SK-N-SH (cell line): ENCODE measurements at regions of chrX and their contacts with region 1.

Region 1: GRCh38 chrX:153927922-153928760 is 2.1 kb upstream of the ARHGAP4 start:
- DNase-seq: peak; percentile 97
- H3K4me3 ChIP-seq: peak overlapping the region; percentile 71 to 94
- H3K27ac ChIP-seq: peak overlapping the region; percentile 97
- H3K4me1 ChIP-seq: peaks cover under 1 to 50% of the 10 kb centered on the region in 2 experiments; a peak in 1 of 4 replicates
- H3K27me3 ChIP-seq: peaks cover 5% of the 10 kb centered on the region; the same call in 1 of the 2 replicates
- CTCF ChIP-seq: peak; percentile 46
- EP300 ChIP-seq: 0 out of 4 replicates have a peak, but pooled peaks of 1 of the 2 experiments have one; percentile 29
- RAD21 ChIP-seq: no peak; the same call in 1 of the 2 replicates

Region 2: GRCh38 chrX:153763989-153764755 is 164.0 kb before region 1 on chrX and contains the start of gene PLXNB3:
- CTCF ChIA-PET with region 1: interaction called, 16 read pairs
- POLR2A ChIA-PET with region 1: no interaction called
- DNase-seq: peak; percentile 87
- H3K4me3 ChIP-seq: peak within 1 kb of the TSS; percentile 40 to 49
- H3K27ac ChIP-seq: peak within 1 kb of the TSS in 1 of 2 experiments; percentile 82; a peak in 3 of 4 replicates
- H3K4me1 ChIP-seq: peaks cover 2 to 27% of the 10 kb centered on the region in 2 experiments; a peak in 1 of 4 replicates
- H3K27me3 ChIP-seq: no peaks in the 10 kb centered on the region
- CTCF ChIP-seq: peak; percentile 92
- EP300 ChIP-seq: no peak
- RAD21 ChIP-seq: peak; percentile 90
- polyA plus RNA-seq, gene PLXNB3: 13.8 and 15.5 TPM in 2 replicates

Region 3: DNA sequence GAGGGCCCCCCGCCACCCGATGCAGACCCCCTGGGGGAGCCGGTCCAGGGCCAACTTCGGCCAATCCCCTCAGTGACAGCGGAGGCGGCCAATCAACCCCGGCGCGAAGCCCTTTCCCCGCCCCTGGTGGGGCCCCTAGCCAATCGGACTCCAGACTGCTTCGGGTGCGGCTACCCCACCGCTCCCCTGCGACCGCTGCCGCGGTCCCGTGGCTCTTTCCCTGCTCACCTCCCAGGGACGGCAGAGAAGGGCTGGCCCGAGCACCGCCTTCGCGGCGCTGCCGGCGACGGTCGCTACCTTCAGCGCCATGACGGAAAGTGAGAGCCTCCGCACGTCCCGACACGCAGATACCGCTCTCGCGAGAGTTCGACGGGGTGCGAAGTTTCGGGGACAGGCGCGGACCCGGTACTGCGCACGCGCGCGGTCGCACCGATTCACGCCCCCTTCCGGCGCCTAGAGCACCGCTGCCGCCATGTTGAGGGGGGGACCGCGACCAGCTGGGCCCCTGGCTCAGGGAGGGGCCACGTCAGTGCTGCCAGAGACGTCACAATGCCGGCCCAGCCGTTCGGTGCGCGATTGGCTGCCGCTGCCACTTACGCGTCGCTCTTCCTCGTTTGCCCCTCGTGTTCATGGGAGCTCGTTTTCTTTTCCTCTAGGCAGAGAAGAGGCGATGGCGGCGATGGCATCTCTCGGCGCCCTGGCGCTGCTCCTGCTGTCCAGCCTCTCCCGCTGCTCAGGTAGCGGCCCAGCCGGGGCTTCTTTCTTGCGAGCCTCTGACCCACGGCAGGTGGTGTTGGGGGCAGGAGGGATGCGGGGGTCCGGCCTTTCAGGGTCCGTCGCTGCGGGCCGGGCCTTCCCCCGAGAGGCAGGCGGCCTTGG is 133.9 kb before region 1 on chrX and contains the starts of genes IDH3G and SSR4:
- CTCF ChIA-PET with region 1: no interaction called
- POLR2A ChIA-PET with region 1: interaction called, 14 read pairs
- DNase-seq: peak; percentile 97
- H3K4me3 ChIP-seq: peak within 1 kb of the TSS; percentile 67 to 76
- H3K27ac ChIP-seq: peak within 1 kb of the TSS; percentile 80 to 84
- H3K4me1 ChIP-seq: peaks cover 5 to 27% of the 10 kb centered on the region in 2 experiments; a peak in 1 of 4 replicates
- H3K27me3 ChIP-seq: peaks cover 14% of the 10 kb centered on the region; the same call in 1 of the 2 replicates
- CTCF ChIP-seq: no peak
- EP300 ChIP-seq: no peak
- RAD21 ChIP-seq: no peak
- polyA plus RNA-seq, gene IDH3G: 78.0 and 107 TPM in 2 replicates
- polyA plus RNA-seq, gene SSR4: 326 and 367 TPM in 2 replicates

Region 4: DNA sequence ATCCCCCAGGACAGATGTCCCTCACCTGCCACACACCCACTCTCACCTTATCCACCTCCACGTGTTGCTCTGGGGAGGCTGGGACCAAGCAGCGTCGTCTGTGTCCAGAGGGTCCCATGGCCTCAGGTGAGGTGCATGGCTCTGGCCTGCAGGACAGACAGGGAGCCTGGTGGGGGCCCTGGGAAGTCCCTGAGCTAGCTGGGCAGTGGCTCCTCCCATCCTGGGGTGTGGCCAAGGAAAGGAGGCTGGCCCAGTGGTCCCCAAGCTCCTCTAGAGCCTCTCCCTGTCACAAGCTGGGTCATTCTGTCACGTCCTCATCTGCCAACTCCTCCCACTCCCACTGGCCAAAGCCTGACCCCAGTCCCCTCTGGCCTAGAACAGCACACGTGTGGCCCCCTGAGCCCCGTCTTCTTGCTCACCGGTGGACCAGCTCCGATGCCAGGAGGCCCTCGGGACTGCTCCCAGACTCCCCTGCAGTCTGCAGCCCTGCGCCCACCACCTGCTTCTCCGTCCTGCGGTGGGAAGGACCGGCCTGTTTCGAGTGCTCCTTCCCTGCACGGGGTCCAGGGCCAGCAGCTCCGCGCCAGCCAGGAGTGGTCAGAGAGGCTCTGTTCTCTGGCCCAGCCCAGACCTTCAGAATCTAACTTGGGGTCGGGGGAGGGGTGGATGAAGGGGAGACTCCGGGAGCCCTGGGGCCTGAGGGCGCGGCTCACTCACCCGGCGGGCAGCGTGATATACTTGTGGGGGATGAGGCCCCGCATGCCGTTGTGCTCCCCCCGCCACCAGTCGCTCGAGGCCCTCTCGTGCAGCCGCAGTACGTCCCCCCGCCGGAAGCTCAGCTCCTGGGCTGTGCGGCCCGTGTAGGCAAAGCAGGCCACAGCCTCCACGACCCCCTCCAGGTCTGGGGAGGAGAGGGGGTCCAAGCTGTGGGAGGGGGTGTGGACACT is 18.8 kb before region 1 on chrX:
- CTCF ChIA-PET with region 1: interaction called, 130 read pairs
- POLR2A ChIA-PET with region 1: interaction called, 3 read pairs
- DNase-seq: peak; percentile 71
- H3K4me3 ChIP-seq: no peak overlapping the region
- H3K27ac ChIP-seq: no peak overlapping the region
- H3K4me1 ChIP-seq: peaks cover 0 to 7% of the 10 kb centered on the region in 2 experiments; a peak in 1 of 4 replicates
- H3K27me3 ChIP-seq: peaks cover 69% of the 10 kb centered on the region
- CTCF ChIP-seq: no peak
- EP300 ChIP-seq: no peak
- RAD21 ChIP-seq: no peak

Region 5: GRCh38 chrX:153941336-153942252 is 13.5 kb after region 1 on chrX:
- CTCF ChIA-PET with region 1: interaction called, 271 read pairs
- POLR2A ChIA-PET with region 1: interaction called, 9 read pairs
- DNase-seq: no peak
- H3K4me3 ChIP-seq: no peak overlapping the region
- H3K27ac ChIP-seq: no peak overlapping the region
- H3K4me1 ChIP-seq: peaks cover 0 to 2% of the 10 kb centered on the region in 2 experiments; a peak in 1 of 4 replicates
- H3K27me3 ChIP-seq: peaks cover 2% of the 10 kb centered on the region; the same call in 1 of the 2 replicates
- CTCF ChIP-seq: no peak
- EP300 ChIP-seq: no peak
- RAD21 ChIP-seq: no peak

Region 6: GRCh38 chrX:153947009-153947769 is 19.0 kb after region 1 on chrX:
- CTCF ChIA-PET with region 1: interaction called, 271 read pairs
- POLR2A ChIA-PET with region 1: interaction called, 9 read pairs
- DNase-seq: peak; percentile 91
- H3K4me3 ChIP-seq: no peak overlapping the region
- H3K27ac ChIP-seq: no peak overlapping the region
- H3K4me1 ChIP-seq: peaks cover 0 to 2% of the 10 kb centered on the region in 2 experiments; a peak in 1 of 4 replicates
- H3K27me3 ChIP-seq: no peaks in the 10 kb centered on the region
- CTCF ChIP-seq: peak; percentile 96
- EP300 ChIP-seq: no peak
- RAD21 ChIP-seq: peak; percentile 72

Region 7: DNA sequence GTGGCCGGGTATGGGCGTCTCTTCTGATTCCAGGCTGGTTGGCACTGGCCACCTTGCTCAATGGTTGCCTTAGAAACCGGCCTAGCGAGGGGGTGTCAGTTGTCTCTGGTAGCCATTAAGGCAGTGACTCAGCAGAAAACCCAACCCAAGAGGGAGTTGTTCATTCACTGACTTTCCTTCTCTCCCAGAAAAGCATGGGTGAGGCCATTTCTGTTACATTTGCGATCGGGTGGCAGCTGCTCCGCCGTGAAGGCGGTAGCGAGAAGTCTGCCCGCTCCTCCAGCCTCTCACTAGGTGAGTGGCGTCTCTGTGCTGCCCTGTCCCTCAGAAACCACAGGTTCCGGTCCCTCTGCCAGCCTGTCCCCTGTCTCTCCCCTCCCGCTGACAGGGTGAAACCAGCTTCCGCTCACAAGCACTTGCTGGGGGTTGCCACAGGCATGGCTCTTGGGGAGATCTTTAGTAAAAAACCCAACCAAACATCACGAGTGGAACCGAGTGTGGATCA is 74.1 kb after region 1 on chrX:
- CTCF ChIA-PET with region 1: no interaction called
- POLR2A ChIA-PET with region 1: no interaction called
- DNase-seq: no peak
- H3K4me3 ChIP-seq: no peak overlapping the region
- H3K27ac ChIP-seq: peak overlapping the region; percentile 17 to 46; a peak in 1 of 4 replicates
- H3K4me1 ChIP-seq: peaks cover 5 to 6% of the 10 kb centered on the region in 2 experiments; a peak in 2 of 4 replicates
- H3K27me3 ChIP-seq: peaks cover 9% of the 10 kb centered on the region; the same call in 1 of the 2 replicates
- CTCF ChIP-seq: no peak
- EP300 ChIP-seq: no peak
- RAD21 ChIP-seq: no peak

Region 8: DNA sequence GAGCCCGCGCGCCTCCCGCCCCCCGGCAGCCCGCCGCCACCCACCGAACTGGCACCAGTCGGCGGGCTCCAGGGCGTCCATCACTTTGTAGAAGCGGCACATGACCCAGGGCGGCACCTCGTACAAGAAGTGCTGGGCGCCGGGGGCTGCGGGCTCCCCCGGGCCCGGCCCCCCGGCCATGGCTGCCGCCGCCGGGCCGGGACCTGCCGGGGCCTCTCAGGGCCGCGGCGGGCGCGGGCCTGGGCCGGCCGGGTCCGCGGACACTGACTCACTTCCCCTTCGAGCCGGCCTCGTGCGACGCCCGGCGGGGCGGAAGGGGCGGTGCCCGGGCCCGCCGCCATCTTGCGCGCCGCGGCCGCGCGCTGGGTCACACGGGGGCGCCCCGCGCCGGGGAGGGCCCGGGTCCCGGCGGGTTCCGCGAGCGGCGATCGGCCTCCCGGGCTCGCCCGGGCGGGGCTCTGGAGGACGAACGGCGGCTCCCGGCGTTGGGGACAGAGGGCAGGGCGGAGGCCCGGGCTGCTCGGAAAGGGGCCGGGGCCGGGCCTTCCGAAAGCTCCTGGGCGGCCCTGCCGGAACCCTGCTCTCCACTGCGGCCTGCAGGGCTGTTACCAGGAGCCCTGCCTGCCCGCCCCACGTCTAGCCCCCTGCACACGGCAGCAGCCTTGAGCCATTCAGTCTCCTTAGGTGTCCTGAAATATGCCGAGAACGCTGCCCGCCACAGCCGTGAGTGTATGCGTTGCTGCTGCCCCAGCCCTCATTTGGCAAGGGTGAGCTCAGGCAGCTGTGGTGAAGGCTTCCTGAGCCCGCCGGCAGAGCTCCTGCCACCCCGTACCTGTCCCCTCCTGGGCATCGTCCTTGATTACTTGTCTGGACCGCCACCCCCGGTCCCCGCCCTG is 91.7 kb after region 1 on chrX and contains the start of gene IRAK1:
- CTCF ChIA-PET with region 1: no interaction called
- POLR2A ChIA-PET with region 1: no interaction called
- DNase-seq: peak; percentile 89
- H3K4me3 ChIP-seq: peak within 1 kb of the TSS; percentile 52 to 57
- H3K27ac ChIP-seq: peak within 1 kb of the TSS; percentile 75 to 81
- H3K4me1 ChIP-seq: peaks cover 0 to 23% of the 10 kb centered on the region in 2 experiments; a peak in 1 of 4 replicates
- H3K27me3 ChIP-seq: peaks cover 20% of the 10 kb centered on the region; the same call in 1 of the 2 replicates
- CTCF ChIP-seq: no peak
- EP300 ChIP-seq: no peak
- RAD21 ChIP-seq: no peak
- polyA plus RNA-seq, gene IRAK1: 66.1 and 68.5 TPM in 2 replicates